ENCODE measurements at regions of chr17 and their contacts with region 1.

Region 1: GRCh38 chr17:62064791-62065563 is at the start of gene MED13:
- DNase-seq: peak; percentile 49 to 92
- H3K4me3 ChIP-seq: peak within 1 kb of the TSS; percentile 75
- CTCF ChIP-seq: no peak
- POLR2A ChIP-seq: no peak
- total RNA-seq, gene MED13: 54.2 to 83.6 (median 61.8) TPM

Region 2: GRCh38 chr17:61776616-61777015 is 288.4 kb before region 1 on chr17:
- intact Hi-C with region 1: no loop called
- DNase-seq: no peak
- H3K4me3 ChIP-seq: no peak overlapping the region
- CTCF ChIP-seq: no peak
- POLR2A ChIP-seq: no peak

Region 3: GRCh38 chr17:61872099-61872498 is 192.9 kb before region 1 on chr17:
- intact Hi-C with region 1: loop called (anchors 5 kb)
- DNase-seq: no peak
- H3K4me3 ChIP-seq: no peak overlapping the region
- CTCF ChIP-seq: no peak
- POLR2A ChIP-seq: no peak

Region 4: GRCh38 chr17:62119373-62119772 is 54.4 kb after region 1 on chr17:
- intact Hi-C with region 1: no loop called
- DNase-seq: no peak
- H3K4me3 ChIP-seq: no peak overlapping the region
- CTCF ChIP-seq: no peak
- POLR2A ChIP-seq: no peak